ENCODE measurements at regions of chr9 and their contacts with region 1.

Region 1: DNA sequence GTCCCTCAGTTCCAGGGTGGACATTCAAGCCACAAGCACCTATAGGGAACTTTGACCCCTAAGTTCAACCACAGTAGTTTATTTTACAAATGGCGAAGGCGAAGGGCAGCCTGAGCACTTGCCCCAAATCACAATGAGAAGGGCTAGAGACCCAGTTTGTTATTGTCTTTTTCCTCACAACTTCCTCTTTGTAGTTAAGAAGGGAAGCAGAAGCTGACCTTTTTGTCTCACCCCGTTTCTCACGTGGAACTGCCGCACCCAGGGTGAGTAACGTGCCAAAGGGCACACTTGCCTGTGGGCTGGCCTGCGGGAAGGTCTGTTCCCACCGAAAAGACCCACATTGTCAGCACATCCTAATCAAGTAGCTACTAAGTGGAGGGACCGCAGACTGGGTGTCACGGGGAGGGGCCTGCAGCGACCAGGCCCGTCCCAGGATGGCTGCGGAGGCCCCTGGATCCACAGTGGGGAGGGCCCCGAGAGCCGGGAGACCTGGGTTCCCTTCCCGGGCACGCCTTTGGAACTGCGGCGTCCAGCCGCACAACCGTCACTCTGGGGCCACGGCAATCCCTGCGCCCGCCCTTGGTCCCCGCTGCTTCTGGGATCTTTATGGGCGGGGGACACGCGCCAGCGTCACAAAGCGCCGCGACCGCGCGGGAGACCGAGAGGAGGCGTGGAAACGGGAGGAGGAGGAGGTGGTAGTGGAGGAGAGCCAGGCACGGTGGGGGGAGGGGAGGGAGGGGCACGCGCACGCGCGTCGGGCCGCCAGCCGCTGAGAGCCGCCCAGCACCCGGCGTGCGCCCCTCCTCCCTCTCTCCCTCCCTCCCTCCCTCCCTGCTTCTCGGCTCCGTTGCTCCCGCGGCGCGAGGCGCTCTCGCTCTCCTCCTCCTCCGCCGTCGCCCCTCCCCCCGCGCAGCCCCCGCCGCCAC is at the start of gene UBE2R2:
- DNase-seq: peak; percentile 86 to 98 (median 91)
- ATAC-seq: peak; percentile 79
- H3K4me3 ChIP-seq: peak within 1 kb of the TSS; percentile 85 to 93
- H3K4me3 Mint-ChIP-seq: peak within 1 kb of the TSS; percentile 89
- H3K27ac ChIP-seq: peak within 1 kb of the TSS; percentile 92 to 94
- H3K27ac Mint-ChIP-seq: peak within 1 kb of the TSS; percentile 98
- H3K4me1 ChIP-seq: peaks cover 23% of the 10 kb centered on the region
- H3K4me1 Mint-ChIP-seq: peaks cover 50% of the 10 kb centered on the region
- H3K27me3 ChIP-seq: no peaks in the 10 kb centered on the region
- H3K27me3 Mint-ChIP-seq: no peaks in the 10 kb centered on the region
- CTCF ChIP-seq: no peak
- total RNA-seq, gene UBE2R2: 20.0 to 20.1 TPM

Region 2: DNA sequence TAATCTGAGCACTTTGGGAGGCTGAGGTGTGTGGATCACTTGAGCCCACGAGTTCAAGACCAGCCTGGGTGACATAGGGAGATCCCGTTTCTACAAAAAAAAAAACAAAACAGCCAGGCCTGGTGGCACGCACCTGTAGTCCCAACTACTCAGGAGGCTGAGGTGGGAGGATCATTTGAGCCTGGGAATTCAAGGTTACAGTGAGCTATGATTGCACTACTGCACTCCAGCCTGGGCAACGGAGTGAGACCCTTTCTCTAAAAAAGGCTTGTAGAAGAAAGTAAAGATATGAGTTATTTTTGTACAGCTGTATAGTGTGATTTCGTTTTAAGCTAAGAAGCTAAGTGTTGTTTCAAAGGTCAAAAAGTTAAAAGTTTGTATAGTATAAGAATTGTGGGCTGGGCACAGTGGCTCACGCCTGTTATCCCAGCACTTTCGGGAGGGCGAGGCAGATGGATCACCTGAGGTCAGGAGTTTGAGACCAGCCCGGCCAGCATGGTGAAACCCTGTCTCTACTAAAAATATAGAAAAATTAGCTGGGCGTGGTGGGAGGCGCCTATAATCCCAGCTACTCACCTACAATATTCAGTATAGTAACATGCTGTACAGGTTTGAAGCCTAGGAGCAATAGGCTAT is 19.2 kb after region 1 on chr9:
- CTCF ChIA-PET with region 1: interaction called, 11 read pairs
- POLR2A ChIA-PET with region 1: no interaction called
- intact Hi-C with region 1: no loop called
- DNase-seq: no peak
- ATAC-seq: no peak
- H3K4me3 ChIP-seq: no peak overlapping the region
- H3K4me3 Mint-ChIP-seq: no peak overlapping the region
- H3K27ac ChIP-seq: no peak overlapping the region
- H3K27ac Mint-ChIP-seq: no peak overlapping the region
- H3K4me1 ChIP-seq: peaks cover 9% of the 10 kb centered on the region
- H3K4me1 Mint-ChIP-seq: peaks cover 53% of the 10 kb centered on the region
- H3K27me3 ChIP-seq: no peaks in the 10 kb centered on the region
- H3K27me3 Mint-ChIP-seq: no peaks in the 10 kb centered on the region
- CTCF ChIP-seq: no peak

Region 3: GRCh38 chr9:33924978-33925797 is 108.6 kb after region 1 on chr9:
- CTCF ChIA-PET with region 1: interaction called, 5 read pairs
- POLR2A ChIA-PET with region 1: no interaction called
- intact Hi-C with region 1: loop called (anchors 2 to 5 kb)
- DNase-seq: peak in 2 of 9 experiments; percentile 20 to 35
- ATAC-seq: no peak
- H3K4me3 ChIP-seq: no peak overlapping the region
- H3K4me3 Mint-ChIP-seq: no peak overlapping the region
- H3K27ac ChIP-seq: no peak overlapping the region
- H3K27ac Mint-ChIP-seq: no peak overlapping the region
- H3K4me1 ChIP-seq: no peaks in the 10 kb centered on the region
- H3K4me1 Mint-ChIP-seq: no peaks in the 10 kb centered on the region
- H3K27me3 ChIP-seq: no peaks in the 10 kb centered on the region
- H3K27me3 Mint-ChIP-seq: no peaks in the 10 kb centered on the region
- CTCF ChIP-seq: no peak

Region 4: GRCh38 chr9:34178520-34179212 is 362.1 kb after region 1 on chr9 and contains the start of gene UBAP1:
- CTCF ChIA-PET with region 1: no interaction called
- POLR2A ChIA-PET with region 1: no interaction called
- intact Hi-C with region 1: loop called (anchors 5 kb)
- DNase-seq: peak; percentile 89 to 98 (median 95)
- ATAC-seq: peak; percentile 98
- H3K4me3 ChIP-seq: peak within 1 kb of the TSS; percentile 88 to 93
- H3K4me3 Mint-ChIP-seq: peak within 1 kb of the TSS; percentile 97
- H3K27ac ChIP-seq: peak within 1 kb of the TSS; percentile 92 to 96
- H3K27ac Mint-ChIP-seq: peak within 1 kb of the TSS; percentile 98
- H3K4me1 ChIP-seq: peaks cover 9% of the 10 kb centered on the region
- H3K4me1 Mint-ChIP-seq: peaks cover 24% of the 10 kb centered on the region
- H3K27me3 ChIP-seq: no peaks in the 10 kb centered on the region
- H3K27me3 Mint-ChIP-seq: no peaks in the 10 kb centered on the region
- CTCF ChIP-seq: no peak
- total RNA-seq, gene UBAP1: 70.9 to 73.2 TPM

Region 5: DNA sequence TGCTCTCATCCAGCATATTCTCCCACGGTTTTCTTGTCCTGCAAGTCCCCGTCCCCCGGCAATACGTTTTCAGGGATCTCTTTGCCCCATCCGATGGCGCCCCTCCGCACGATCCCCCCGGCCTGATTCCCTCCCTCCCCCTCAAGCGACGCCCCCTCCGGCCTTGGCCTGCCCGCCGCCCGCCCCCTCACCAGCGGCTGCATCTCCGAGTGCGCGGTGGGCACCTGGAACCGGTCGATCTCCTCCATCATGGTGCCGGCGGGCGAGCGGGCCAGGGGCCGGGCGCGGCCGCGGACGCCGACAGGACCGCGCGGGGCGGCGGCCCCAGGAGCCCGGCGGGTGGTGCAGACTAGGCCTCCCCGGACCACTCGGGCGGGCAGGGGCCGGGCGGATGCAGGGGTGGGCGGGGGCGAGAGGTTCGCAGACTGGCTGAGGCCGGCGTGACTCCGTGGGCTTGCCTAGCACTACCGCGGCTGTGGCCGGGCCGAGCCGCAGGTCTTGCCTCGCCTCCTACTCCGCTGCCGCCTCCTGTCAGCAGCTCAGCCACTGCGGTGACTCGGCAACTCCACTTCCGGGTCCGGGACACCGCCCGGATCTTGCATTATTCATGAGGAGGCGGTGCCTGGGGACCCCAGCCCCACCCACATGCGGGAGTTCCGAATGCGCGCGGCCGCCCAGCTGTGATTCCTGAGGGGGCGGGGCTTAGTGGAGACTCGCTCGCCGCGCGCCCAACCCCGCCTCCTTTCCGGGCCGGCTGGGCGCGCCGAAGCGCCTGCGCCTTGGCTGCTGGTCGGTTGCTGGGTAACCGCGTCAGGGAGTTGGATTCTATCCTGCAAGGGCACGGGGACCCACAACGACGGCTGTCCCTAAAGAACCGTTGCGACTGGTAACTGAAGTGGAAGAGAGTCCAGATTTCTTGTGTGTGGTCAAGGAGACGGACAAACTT is 641.7 kb after region 1 on chr9 and contains the starts of genes DNAI1 and FAM219A:
- CTCF ChIA-PET with region 1: no interaction called
- POLR2A ChIA-PET with region 1: no interaction called
- intact Hi-C with region 1: loop called in 1 of 2 experiments (anchors 5 kb)
- DNase-seq: peak; percentile 98 to 99 (median 99)
- ATAC-seq: peak; percentile 96
- H3K4me3 ChIP-seq: peak within 1 kb of the TSS; percentile 61 to 67
- H3K4me3 Mint-ChIP-seq: peak within 1 kb of the TSS; percentile 91
- H3K27ac ChIP-seq: peak within 1 kb of the TSS in 1 of 2 experiments; percentile 29
- H3K27ac Mint-ChIP-seq: peak within 1 kb of the TSS; percentile 46
- H3K4me1 ChIP-seq: peaks cover 14% of the 10 kb centered on the region
- H3K4me1 Mint-ChIP-seq: peaks cover 30% of the 10 kb centered on the region
- H3K27me3 ChIP-seq: no peaks in the 10 kb centered on the region
- H3K27me3 Mint-ChIP-seq: no peaks in the 10 kb centered on the region
- CTCF ChIP-seq: no peak
- total RNA-seq, gene DNAI1: not detected
- total RNA-seq, gene FAM219A: 5.5 to 5.9 TPM

Measured in CD8-positive, alpha-beta T cell (primary cell).